Mammary epithelial cell (primary cell): ENCODE measurements at regions of chrX and their contacts with region 1.

Region 1: DNA sequence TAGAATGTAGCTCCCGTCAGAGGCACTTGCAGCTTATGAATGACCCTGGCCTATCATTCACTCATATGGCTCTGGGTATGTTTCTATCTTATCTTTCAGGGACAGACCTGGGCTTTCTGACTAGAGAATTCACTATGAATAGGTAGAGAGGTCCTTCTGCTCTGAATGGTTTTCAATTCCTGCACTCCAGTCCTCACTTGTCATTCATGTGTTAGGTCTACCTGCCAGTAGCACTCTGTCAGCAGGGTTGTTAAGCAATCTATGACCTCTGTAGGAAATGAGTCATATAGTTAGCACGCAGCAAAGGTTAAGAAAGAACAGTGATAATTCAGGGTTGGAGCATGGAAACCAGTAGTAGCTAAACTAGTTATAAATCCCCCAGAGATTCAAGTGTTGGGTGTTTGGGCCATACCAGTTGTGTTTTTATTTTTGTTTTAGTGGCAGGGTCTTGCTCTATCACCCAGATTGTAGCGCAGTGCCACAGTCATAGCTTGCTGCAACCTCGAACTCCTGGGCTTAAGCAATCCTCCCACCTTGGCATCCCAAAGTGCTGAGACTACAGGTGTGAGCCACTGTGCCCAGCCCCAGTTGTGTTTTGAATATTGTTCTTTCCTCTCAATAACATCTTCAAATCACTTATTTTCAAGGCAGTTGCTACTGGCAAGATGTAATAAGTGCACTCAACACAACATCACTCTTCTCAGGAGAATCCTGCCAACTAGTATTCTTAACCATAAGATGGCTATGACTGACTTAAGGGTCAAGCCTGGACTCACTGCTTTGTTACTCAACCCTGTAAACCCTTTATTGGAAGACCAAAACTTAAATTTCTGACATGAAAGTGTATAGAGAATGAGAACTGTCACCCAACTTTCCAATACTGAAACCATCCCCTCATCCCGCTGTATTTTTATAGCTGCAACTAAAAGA is 25.1 kb downstream of the ARL13A start:
- DNase-seq: peak; percentile 79
- H3K4me3 ChIP-seq: no peak overlapping the region
- H3K27ac ChIP-seq: peak overlapping the region; percentile 76
- H3K4me1 ChIP-seq: peaks cover 32% of the 10 kb centered on the region
- H3K27me3 ChIP-seq: no peaks in the 10 kb centered on the region
- CTCF ChIP-seq: no peak

Region 2: GRCh38 chrX:100980605-100981497 is 13.8 kb before region 1 on chrX:
- CTCF ChIA-PET with region 1: no interaction called
- dilution Hi-C with region 1: no loop called
- in situ Hi-C with region 1: no loop called
- intact Hi-C with region 1: loop called (anchors 2 kb)
- DNase-seq: peak; percentile 53
- H3K4me3 ChIP-seq: no peak overlapping the region
- H3K27ac ChIP-seq: peak overlapping the region; percentile 57
- H3K4me1 ChIP-seq: peaks cover 24% of the 10 kb centered on the region
- H3K27me3 ChIP-seq: no peaks in the 10 kb centered on the region
- CTCF ChIP-seq: no peak